H1 (cell line): ENCODE measurements at regions of chr1 and their contacts with region 1.

Region 1: GRCh38 chr1:88180449-88181108 is 503.5 kb upstream of the PKN2 start:
- DNase-seq: peak; percentile 78 to 79
- H3K4me3 ChIP-seq: no peak overlapping the region
- H3K27ac ChIP-seq: no peak overlapping the region
- H3K4me1 ChIP-seq: no peaks in the 10 kb centered on the region
- H3K27me3 ChIP-seq: no peaks in the 10 kb centered on the region
- CTCF ChIP-seq: peak; percentile 90 to 99 (median 91)
- EP300 ChIP-seq: no peak
- POLR2A ChIP-seq: no peak
- RAD21 ChIP-seq: peak; percentile 93 to 96

Region 2: GRCh38 chr1:88141499-88142074 is 39.0 kb before region 1 on chr1:
- CTCF ChIA-PET with region 1: no interaction called
- POLR2A ChIA-PET with region 1: no interaction called
- DNase-seq: no peak
- H3K4me3 ChIP-seq: no peak overlapping the region
- H3K27ac ChIP-seq: no peak overlapping the region
- H3K4me1 ChIP-seq: peaks cover 0 to 9% (median 0%) of the 10 kb centered on the region in 4 experiments; a peak in 1 of 7 replicates
- H3K27me3 ChIP-seq: no peaks in the 10 kb centered on the region
- CTCF ChIP-seq: no peak
- EP300 ChIP-seq: no peak
- POLR2A ChIP-seq: no peak
- RAD21 ChIP-seq: no peak

Region 3: GRCh38 chr1:88168126-88168525 is 12.5 kb before region 1 on chr1:
- CTCF ChIA-PET with region 1: interaction called, 12 read pairs
- POLR2A ChIA-PET with region 1: no interaction called
- DNase-seq: no peak
- H3K4me3 ChIP-seq: no peak overlapping the region
- H3K27ac ChIP-seq: no peak overlapping the region
- H3K4me1 ChIP-seq: no peaks in the 10 kb centered on the region
- H3K27me3 ChIP-seq: no peaks in the 10 kb centered on the region
- CTCF ChIP-seq: no peak
- EP300 ChIP-seq: no peak
- POLR2A ChIP-seq: no peak
- RAD21 ChIP-seq: no peak

Region 4: DNA sequence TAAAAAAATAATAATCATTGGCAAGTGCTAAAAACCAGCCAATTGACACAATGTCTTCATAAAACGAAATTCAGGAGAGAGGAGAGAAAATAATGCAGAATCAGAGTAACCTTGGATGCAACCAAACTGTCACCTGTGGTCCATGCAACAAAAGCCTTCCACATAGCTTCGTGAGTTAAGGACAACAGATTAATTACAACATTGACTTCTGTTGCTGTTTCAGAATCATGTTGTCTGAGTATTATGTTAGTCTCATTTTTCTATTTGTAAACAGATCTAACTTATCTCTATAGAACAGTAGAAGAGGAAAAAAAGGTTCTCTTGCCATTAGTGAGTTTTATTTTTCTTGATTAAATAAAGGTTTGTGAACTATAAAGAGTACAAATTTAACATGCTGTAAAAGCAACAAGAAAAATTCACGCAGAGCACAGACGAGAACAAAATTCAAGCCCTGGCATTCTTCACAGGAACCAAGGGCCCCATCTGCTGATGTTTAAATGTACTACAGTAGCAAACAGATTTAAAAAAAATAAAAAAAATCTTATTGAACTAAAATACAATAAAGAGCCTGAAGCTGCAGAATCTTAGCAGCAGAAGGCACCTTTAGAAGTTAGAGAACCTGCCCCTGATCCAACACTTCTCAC is 122.4 kb after region 1 on chr1:
- CTCF ChIA-PET with region 1: interaction called, 31 read pairs
- POLR2A ChIA-PET with region 1: no interaction called
- DNase-seq: peak in 1 of 2 experiments; percentile 3
- H3K4me3 ChIP-seq: no peak overlapping the region
- H3K27ac ChIP-seq: no peak overlapping the region
- H3K4me1 ChIP-seq: no peaks in the 10 kb centered on the region; a peak in 1 of 7 replicates
- H3K27me3 ChIP-seq: no peaks in the 10 kb centered on the region
- CTCF ChIP-seq: peak in 2 of 3 experiments; percentile 31 to 56; a peak in 3 of 4 replicates
- EP300 ChIP-seq: no peak
- POLR2A ChIP-seq: no peak
- RAD21 ChIP-seq: peak; percentile 76 to 85